ENCODE measurements at regions of chr5 and their contacts with region 1.

Region 1: GRCh38 chr5:93915142-93915553 is 173.7 kb upstream of the POU5F2 start:
- DNase-seq: no peak
- H3K4me3 Mint-ChIP-seq: no peak overlapping the region
- H3K27ac Mint-ChIP-seq: no peak overlapping the region
- H3K4me1 Mint-ChIP-seq: no peaks in the 10 kb centered on the region
- H3K27me3 Mint-ChIP-seq: no peaks in the 10 kb centered on the region
- CTCF ChIP-seq: peak; percentile 57

Region 2: GRCh38 chr5:91938441-91938840 is 1976.7 kb before region 1 on chr5:
- CTCF ChIA-PET with region 1: no interaction called
- intact Hi-C with region 1: loop called (anchors 10 kb)
- DNase-seq: no peak
- H3K4me3 Mint-ChIP-seq: no peak overlapping the region
- H3K27ac Mint-ChIP-seq: no peak overlapping the region
- H3K4me1 Mint-ChIP-seq: no peaks in the 10 kb centered on the region
- H3K27me3 Mint-ChIP-seq: no peaks in the 10 kb centered on the region
- CTCF ChIP-seq: no peak

Region 3: DNA sequence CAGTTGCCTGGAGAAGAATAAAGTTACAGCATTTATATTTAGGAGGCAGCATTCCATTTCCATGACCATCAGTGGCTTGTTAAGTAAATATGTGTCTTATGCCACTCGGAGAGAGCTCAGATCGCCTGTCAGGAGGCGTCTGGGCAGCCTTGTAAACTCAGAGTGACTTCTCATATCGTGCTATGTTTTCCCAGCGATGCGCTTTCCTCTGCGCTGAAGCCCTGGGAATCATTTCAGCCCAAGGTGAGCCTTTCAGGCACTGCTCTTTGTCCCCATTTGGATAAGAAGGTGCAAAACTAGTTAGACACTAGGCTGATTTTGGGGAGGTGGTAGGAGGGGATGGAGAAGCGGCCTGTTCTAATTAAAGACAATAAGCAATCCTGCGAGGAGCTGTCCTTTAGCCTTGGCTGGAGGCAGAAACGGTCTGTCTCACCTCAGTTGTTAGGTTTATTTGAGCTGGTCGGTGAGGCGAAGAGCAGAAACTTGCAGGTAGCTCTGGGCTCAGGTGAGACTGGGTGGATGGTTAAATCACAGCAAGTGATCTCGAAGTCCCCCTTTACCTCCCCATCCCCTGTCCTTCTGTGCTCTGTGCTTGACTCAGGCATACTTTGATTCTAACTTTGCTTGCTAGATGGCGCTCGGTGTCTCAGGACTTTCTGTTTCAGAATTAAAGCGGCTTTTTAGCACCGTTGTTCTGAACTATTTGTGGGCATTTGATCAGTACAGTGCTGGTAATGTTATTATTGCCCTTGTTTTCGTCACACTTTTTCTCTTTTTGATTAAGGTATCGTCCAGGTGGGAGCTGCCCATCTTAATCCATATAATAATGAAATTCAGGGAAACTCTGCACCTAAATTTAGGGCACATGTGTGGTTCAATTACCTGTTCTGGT is 307.5 kb before region 1 on chr5:
- CTCF ChIA-PET with region 1: no interaction called
- intact Hi-C with region 1: loop called (anchors 5 kb)
- DNase-seq: peak; percentile 44
- H3K4me3 Mint-ChIP-seq: no peak overlapping the region
- H3K27ac Mint-ChIP-seq: no peak overlapping the region
- H3K4me1 Mint-ChIP-seq: peaks cover 26% of the 10 kb centered on the region
- H3K27me3 Mint-ChIP-seq: peaks cover 47% of the 10 kb centered on the region
- CTCF ChIP-seq: peak; percentile 64

Region 4: DNA sequence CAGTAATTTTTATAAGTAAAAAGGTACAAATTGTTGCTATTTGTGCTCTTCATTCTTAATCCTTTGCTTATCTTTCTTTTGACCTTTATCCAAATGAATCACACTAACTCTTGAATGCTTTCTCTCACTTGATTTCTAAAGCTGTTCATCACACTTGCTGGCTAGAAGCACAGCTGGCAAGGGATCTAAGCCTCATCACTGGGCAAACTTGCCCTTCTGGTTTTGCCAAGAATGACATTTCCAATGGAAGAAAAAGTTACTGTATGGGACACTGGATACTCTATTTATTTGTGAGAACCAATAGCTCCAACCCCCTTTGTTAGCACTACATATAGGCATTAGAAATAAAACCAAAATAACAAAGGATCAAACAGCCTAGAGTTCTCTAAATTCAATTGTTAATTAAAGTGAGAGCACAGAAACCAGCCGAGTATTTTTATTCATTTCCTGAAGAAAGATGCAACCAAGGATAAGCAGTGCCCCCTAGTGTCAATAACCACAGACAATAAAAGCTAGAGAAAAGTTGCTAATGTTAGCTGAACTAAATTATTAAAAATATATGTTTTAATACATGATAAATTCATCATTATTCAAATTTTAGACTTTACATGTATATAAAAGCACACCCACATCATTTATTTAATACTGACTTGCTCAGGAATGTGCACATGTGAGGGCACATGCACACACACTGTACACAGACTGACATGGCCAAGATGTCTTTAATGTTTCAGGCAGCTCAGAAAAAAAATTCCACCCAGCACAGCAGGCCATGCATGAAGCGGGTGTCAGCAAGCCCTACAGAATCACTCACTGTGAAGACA is 113.9 kb before region 1 on chr5:
- CTCF ChIA-PET with region 1: interaction called, 3 read pairs
- intact Hi-C with region 1: loop called (anchors 5 kb)
- DNase-seq: peak; percentile 58
- H3K4me3 Mint-ChIP-seq: no peak overlapping the region
- H3K27ac Mint-ChIP-seq: peak overlapping the region; percentile 55
- H3K4me1 Mint-ChIP-seq: peaks cover 15% of the 10 kb centered on the region
- H3K27me3 Mint-ChIP-seq: no peaks in the 10 kb centered on the region
- CTCF ChIP-seq: peak; percentile 84

Region 5: GRCh38 chr5:94693043-94693822 is 778.1 kb after region 1 on chr5:
- CTCF ChIA-PET with region 1: no interaction called
- intact Hi-C with region 1: loop called (anchors 10 kb)
- DNase-seq: no peak
- H3K4me3 Mint-ChIP-seq: no peak overlapping the region
- H3K27ac Mint-ChIP-seq: no peak overlapping the region
- H3K4me1 Mint-ChIP-seq: no peaks in the 10 kb centered on the region
- H3K27me3 Mint-ChIP-seq: no peaks in the 10 kb centered on the region
- CTCF ChIP-seq: no peak

Region 6: GRCh38 chr5:94731471-94731870 is 816.3 kb after region 1 on chr5:
- CTCF ChIA-PET with region 1: no interaction called
- intact Hi-C with region 1: loop called (anchors 10 kb)
- DNase-seq: no peak
- H3K4me3 Mint-ChIP-seq: no peak overlapping the region
- H3K27ac Mint-ChIP-seq: no peak overlapping the region
- H3K4me1 Mint-ChIP-seq: no peaks in the 10 kb centered on the region
- H3K27me3 Mint-ChIP-seq: no peaks in the 10 kb centered on the region
- CTCF ChIP-seq: no peak

Measured in Calu3 (cell line).